SK-N-SH (cell line): ENCODE measurements at regions of chr3 and their contacts with region 1.

Region 1: DNA sequence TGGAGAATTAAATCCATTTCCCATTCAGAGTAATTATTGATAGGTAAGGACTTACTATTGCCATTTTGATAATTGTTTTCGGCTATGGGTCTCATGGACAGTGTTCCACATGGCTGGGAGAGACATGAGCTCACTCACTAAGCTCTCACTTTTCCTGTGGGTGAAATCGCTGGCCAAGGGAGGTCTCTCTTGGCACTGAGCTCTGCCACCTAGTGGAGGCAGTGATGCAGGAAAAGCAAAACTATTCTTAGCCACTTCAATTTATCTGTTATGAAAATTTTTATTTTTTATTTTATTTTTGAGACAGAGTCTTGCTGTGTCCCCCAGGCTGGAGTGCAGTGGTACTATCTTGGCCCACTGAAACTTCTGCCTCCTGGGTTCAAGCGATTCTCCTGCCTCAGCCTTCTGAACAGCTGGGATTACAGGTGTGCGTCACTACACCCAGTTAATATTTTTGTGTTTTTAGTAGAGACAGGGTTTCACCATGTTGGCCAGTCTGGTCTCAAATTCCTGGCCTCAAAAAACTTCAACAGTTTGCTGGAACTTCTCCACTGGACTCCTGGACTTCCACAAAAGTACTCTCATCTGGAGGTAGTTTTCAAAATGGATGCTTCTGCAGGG is 4.7 kb upstream of the RNF13 start:
- DNase-seq: peak; percentile 67
- H3K4me3 ChIP-seq: no peak overlapping the region
- H3K27ac ChIP-seq: no peak overlapping the region
- H3K4me1 ChIP-seq: peaks cover 4 to 8% of the 10 kb centered on the region in 2 experiments; a peak in 2 of 4 replicates
- H3K27me3 ChIP-seq: no peaks in the 10 kb centered on the region
- CTCF ChIP-seq: peak; percentile 93
- EP300 ChIP-seq: no peak
- RAD21 ChIP-seq: peak; percentile 69

Region 2: GRCh38 chr3:149512209-149512782 is 296.0 kb before region 1 on chr3:
- CTCF ChIA-PET with region 1: interaction called, 14 read pairs
- POLR2A ChIA-PET with region 1: no interaction called
- DNase-seq: peak; percentile 78
- H3K4me3 ChIP-seq: peak overlapping the region; percentile 21 to 29; a peak in 2 of 4 replicates
- H3K27ac ChIP-seq: no peak overlapping the region
- H3K4me1 ChIP-seq: peaks cover 0 to 12% of the 10 kb centered on the region in 2 experiments; a peak in 1 of 4 replicates
- H3K27me3 ChIP-seq: no peaks in the 10 kb centered on the region
- CTCF ChIP-seq: peak; percentile 90
- EP300 ChIP-seq: no peak
- RAD21 ChIP-seq: peak; percentile 93

Region 3: GRCh38 chr3:149765762-149766334 is 42.5 kb before region 1 on chr3:
- CTCF ChIA-PET with region 1: interaction called, 31 read pairs
- POLR2A ChIA-PET with region 1: no interaction called
- DNase-seq: peak; percentile 9
- H3K4me3 ChIP-seq: no peak overlapping the region
- H3K27ac ChIP-seq: no peak overlapping the region
- H3K4me1 ChIP-seq: no peaks in the 10 kb centered on the region
- H3K27me3 ChIP-seq: no peaks in the 10 kb centered on the region; the same call in 1 of the 2 replicates
- CTCF ChIP-seq: peak; percentile 71
- EP300 ChIP-seq: no peak
- RAD21 ChIP-seq: peak; percentile 72

Region 4: DNA sequence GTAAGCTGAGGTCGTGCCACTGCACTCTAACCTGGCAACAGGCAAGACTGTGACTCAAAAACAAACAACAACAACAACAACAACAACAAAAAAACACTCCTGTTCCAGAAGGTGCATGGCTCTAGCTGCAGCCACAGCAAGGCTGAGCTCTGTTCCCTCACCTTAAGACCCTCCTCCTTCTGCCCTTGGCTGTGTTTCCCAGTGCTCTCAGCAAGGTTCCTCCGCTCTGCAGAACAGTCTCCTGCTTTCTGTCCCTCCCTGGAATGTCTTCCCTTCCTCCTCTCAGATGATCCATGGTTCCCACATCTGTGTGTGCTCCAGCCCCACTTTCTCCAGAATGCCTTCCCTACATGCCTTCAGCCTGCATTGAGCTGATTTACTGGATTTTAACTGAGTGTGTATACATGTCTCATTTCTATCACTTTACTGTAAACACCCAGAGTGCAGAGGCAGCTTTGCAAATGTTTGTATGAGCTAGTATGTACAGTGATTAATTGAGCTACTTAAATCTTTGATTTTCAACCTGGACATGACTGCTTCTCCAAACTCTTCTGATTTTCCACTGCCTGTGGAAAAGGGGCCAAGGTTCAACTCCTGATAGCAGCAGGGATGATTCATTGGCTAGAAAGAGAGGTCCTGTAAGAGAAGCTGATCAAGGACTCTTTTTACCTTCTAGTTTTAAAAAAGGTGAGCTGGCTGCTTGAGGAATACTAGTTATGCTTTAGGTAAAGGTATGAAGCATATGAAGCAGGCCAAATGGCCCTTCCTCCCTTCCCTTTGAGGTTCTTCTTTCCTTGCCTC is 30.7 kb before region 1 on chr3:
- CTCF ChIA-PET with region 1: interaction called, 29 read pairs
- POLR2A ChIA-PET with region 1: no interaction called
- DNase-seq: no peak
- H3K4me3 ChIP-seq: no peak overlapping the region
- H3K27ac ChIP-seq: no peak overlapping the region
- H3K4me1 ChIP-seq: no peaks in the 10 kb centered on the region
- H3K27me3 ChIP-seq: no peaks in the 10 kb centered on the region
- CTCF ChIP-seq: no peak
- EP300 ChIP-seq: no peak
- RAD21 ChIP-seq: no peak

Region 5: DNA sequence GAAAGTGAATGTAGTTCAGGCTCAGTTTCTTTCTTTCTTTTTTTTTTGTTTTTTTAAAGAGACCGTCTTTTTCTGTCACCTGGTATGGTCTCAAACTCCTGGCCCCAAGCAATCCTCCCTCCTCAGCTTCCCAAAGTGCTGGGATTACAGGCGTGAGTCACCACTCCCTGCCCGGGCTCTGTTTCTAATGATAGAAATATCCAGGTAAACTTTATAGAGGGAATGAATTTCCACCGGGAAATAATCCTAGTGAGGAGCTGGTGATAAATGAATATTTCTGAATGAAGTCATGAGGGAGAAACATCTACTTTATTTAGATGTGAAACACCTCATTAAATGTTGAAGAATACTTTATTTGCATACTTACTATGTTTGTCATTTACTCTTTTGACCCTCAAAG is 11.9 kb after region 1 on chr3:
- CTCF ChIA-PET with region 1: interaction called, 21 read pairs
- POLR2A ChIA-PET with region 1: no interaction called
- DNase-seq: no peak
- H3K4me3 ChIP-seq: no peak overlapping the region
- H3K27ac ChIP-seq: no peak overlapping the region
- H3K4me1 ChIP-seq: peaks cover under 1 to 2% of the 10 kb centered on the region in 2 experiments; a peak in 2 of 4 replicates
- H3K27me3 ChIP-seq: no peaks in the 10 kb centered on the region
- CTCF ChIP-seq: no peak
- EP300 ChIP-seq: no peak
- RAD21 ChIP-seq: no peak